IMR-90 (cell line): ENCODE measurements at regions of chr18 and their contacts with region 1.

Region 1: DNA sequence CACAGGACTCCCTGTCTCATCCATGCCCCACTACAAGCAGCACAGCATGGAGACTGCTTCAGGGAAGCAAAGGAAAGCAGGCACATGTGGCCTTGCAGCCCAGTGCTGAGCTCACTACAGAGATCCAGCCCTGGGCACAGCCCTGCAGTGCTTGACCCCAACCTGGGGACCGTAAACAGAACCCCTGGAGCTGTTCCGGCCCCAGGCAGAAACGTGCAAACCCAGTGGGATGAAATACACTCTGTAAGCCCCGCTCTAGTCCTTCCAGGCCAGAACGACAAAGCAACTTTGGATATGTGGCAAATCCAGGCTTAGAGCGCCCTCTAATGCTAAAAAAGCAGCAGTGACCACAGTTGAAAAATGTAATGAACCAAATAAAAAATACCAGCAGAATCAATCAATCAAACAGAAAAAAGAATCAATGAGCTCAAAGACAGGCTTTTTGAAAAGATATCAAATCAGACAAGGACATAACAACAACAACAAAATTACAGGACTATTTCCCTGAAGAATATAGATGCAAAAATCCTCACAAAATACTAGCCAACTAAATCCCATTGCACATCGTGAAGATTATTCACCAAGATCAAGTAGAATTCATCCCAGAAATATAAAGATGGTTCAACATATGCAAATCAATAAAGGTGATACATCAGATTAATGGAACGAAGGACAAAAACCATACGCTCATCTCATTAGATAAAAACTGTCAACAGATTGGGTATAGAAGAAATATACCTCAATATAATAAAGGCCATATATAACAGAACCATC is 45.6 kb downstream of the ZNF519 start:
- DNase-seq: peak; percentile 37
- ATAC-seq: peak; percentile 88
- H3K4me3 ChIP-seq: no peak overlapping the region
- H3K27ac ChIP-seq: no peak overlapping the region
- H3K4me1 ChIP-seq: no peaks in the 10 kb centered on the region
- H3K27me3 ChIP-seq: no peaks in the 10 kb centered on the region
- CTCF ChIP-seq: peak; percentile 83
- POLR2A ChIP-seq: no peak
- RAD21 ChIP-seq: peak; percentile 84

Region 2: GRCh38 chr18:13558124-13558523 is 528.5 kb before region 1 on chr18:
- CTCF ChIA-PET with region 1: no interaction called
- POLR2A ChIA-PET with region 1: no interaction called
- dilution Hi-C with region 1: no loop called
- in situ Hi-C with region 1: no loop called
- intact Hi-C with region 1: loop called (anchors 5 kb)
- DNase-seq: peak; percentile 11
- ATAC-seq: peak; percentile 82
- H3K4me3 ChIP-seq: no peak overlapping the region
- H3K27ac ChIP-seq: no peak overlapping the region
- H3K4me1 ChIP-seq: no peaks in the 10 kb centered on the region
- H3K27me3 ChIP-seq: peaks cover 6% of the 10 kb centered on the region; the same call in 1 of the 2 replicates
- CTCF ChIP-seq: peak; percentile 41
- POLR2A ChIP-seq: no peak
- RAD21 ChIP-seq: peak; percentile 44

Region 3: GRCh38 chr18:13813271-13813849 is 273.3 kb before region 1 on chr18:
- CTCF ChIA-PET with region 1: interaction called, 13 read pairs
- POLR2A ChIA-PET with region 1: no interaction called
- dilution Hi-C with region 1: no loop called
- in situ Hi-C with region 1: no loop called
- intact Hi-C with region 1: loop called (anchors 1 kb)
- DNase-seq: peak; percentile 51
- ATAC-seq: peak; percentile 99
- H3K4me3 ChIP-seq: no peak overlapping the region
- H3K27ac ChIP-seq: no peak overlapping the region
- H3K4me1 ChIP-seq: no peaks in the 10 kb centered on the region
- H3K27me3 ChIP-seq: no peaks in the 10 kb centered on the region
- CTCF ChIP-seq: peak; percentile 81
- POLR2A ChIP-seq: no peak
- RAD21 ChIP-seq: peak; percentile 62

Region 4: DNA sequence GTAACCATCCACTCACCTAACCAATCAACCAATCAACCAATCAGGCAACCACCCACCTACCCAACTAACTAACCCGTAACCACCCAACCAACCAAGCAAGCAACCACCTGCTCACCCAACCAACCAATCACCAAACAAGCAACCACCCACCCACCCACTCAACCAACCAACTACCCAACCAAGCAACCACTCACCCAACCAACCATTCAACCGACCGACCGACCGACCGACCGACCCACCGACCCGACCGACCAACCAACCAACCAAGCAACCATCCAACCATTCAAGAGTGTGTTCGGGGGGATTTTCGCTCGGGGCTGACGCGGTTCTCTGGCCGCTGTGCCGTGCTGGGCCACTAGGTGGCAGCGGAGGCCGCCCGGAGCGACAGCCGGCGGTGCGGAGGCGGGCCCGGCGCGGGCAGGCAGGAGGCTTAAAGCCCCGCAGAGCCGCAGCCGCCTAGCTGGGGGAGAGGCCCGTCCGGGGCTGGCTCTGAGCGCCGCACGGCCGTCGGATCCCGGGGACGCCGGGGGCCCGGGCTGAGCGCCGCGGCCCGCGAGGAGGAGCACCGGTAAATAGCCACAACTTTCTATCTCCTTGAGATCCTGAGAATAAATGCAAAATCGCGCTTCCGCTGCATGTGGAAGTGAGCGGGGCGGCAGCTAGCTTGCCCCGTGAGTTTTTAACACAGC is 262.8 kb before region 1 on chr18 and contains the start of gene MC5R:
- CTCF ChIA-PET with region 1: interaction called, 7 read pairs
- POLR2A ChIA-PET with region 1: no interaction called
- dilution Hi-C with region 1: no loop called
- in situ Hi-C with region 1: loop called (anchors 5 kb)
- intact Hi-C with region 1: loop called (anchors 1 kb)
- DNase-seq: peak; percentile 25
- ATAC-seq: peak; percentile 100
- H3K4me3 ChIP-seq: peak within 1 kb of the TSS; percentile 23
- H3K27ac ChIP-seq: no peak within 1 kb of the TSS
- H3K4me1 ChIP-seq: no peaks in the 10 kb centered on the region
- H3K27me3 ChIP-seq: no peaks in the 10 kb centered on the region
- CTCF ChIP-seq: peak; percentile 92
- POLR2A ChIP-seq: no peak
- RAD21 ChIP-seq: peak; percentile 81
- total RNA-seq, gene MC5R: not detected in 2 replicates

Region 5: GRCh38 chr18:13893418-13893760 is 193.3 kb before region 1 on chr18:
- CTCF ChIA-PET with region 1: no interaction called
- POLR2A ChIA-PET with region 1: no interaction called
- dilution Hi-C with region 1: no loop called
- in situ Hi-C with region 1: no loop called
- intact Hi-C with region 1: no loop called
- DNase-seq: no peak
- ATAC-seq: no peak
- H3K4me3 ChIP-seq: no peak overlapping the region
- H3K27ac ChIP-seq: no peak overlapping the region
- H3K4me1 ChIP-seq: no peaks in the 10 kb centered on the region
- H3K27me3 ChIP-seq: no peaks in the 10 kb centered on the region
- CTCF ChIP-seq: no peak
- POLR2A ChIP-seq: no peak
- RAD21 ChIP-seq: no peak

Region 6: DNA sequence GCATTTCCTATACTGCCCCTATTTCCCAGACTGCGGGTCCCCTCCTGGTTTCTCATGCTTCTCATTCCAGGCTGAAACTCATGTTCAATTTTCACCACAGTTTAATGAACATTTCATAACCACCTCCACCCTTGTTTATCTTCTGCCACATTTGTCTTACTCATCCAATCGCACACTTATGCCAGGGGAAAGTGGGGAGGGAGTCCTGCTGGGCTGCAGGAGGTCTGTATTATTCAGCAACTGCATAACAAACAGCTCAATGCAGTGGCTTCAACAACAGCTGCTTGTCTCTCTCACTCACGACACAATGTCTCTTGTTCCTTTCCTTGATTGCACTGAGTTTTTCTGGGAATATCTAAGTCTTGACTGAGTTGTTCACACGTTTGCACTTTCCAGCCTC is 60.4 kb before region 1 on chr18:
- CTCF ChIA-PET with region 1: no interaction called
- POLR2A ChIA-PET with region 1: no interaction called
- dilution Hi-C with region 1: no loop called
- in situ Hi-C with region 1: no loop called
- intact Hi-C with region 1: no loop called
- DNase-seq: no peak
- ATAC-seq: no peak
- H3K4me3 ChIP-seq: no peak overlapping the region
- H3K27ac ChIP-seq: no peak overlapping the region
- H3K4me1 ChIP-seq: no peaks in the 10 kb centered on the region
- H3K27me3 ChIP-seq: no peaks in the 10 kb centered on the region
- CTCF ChIP-seq: no peak
- POLR2A ChIP-seq: no peak
- RAD21 ChIP-seq: no peak